ENCODE measurements at regions of chr12 and their contacts with region 1.

Region 1: DNA sequence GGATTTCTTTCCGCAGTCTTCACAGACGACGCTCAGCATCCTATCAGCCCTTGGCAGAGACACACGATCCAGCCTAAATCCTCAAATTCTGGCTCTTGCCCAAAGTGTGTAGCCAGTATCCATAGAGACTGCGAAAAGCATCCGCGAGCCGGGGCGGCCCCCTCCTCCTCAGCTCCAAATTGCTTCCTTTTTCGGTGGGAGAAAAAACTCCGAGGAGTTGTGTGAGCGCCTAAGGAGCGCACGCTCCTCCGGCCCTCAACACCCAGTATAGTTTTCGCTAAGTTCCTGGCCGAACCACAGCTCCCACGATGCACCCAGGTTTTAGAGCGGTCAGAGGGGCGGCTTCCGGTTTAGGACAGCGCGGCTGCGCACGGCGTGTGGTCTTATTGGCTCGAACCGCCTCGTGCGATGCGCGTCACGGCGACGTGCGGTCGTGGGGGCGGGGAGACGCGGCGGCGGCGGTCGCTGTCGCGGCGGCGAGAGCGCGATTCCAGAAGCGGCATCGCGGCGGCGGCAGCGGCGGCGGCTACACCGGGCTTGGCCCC is at the start of gene ADIPOR2:
- DNase-seq: peak; percentile 96 to 98
- ATAC-seq: peak; percentile 98 to 99
- H3K4me3 ChIP-seq: peak within 1 kb of the TSS; percentile 97
- H3K27ac ChIP-seq: peak within 1 kb of the TSS; percentile 95
- H3K4me1 ChIP-seq: peaks cover 19% of the 10 kb centered on the region
- CTCF ChIP-seq: no peak
- EP300 ChIP-seq: no peak
- POLR2A ChIP-seq: peak; percentile 86
- RAD21 ChIP-seq: no peak; a peak in 1 of 5 replicates
- polyA plus RNA-seq, gene ADIPOR2: 65.4 and 80.0 TPM in 2 replicates

Region 2: GRCh38 chr12:1594261-1595025 is 96.2 kb before region 1 on chr12 and contains the start of gene FBXL14:
- CTCF ChIA-PET with region 1: no interaction called
- POLR2A ChIA-PET with region 1: no interaction called
- DNase-seq: peak; percentile 76 to 87
- ATAC-seq: peak; percentile 79 to 84
- H3K4me3 ChIP-seq: peak within 1 kb of the TSS; percentile 68
- H3K27ac ChIP-seq: peak within 1 kb of the TSS; percentile 91 to 99
- H3K4me1 ChIP-seq: peaks cover 38% of the 10 kb centered on the region
- CTCF ChIP-seq: no peak
- EP300 ChIP-seq: no peak
- POLR2A ChIP-seq: peak; percentile 65
- RAD21 ChIP-seq: no peak
- polyA plus RNA-seq, gene FBXL14: 6.7 and 8.2 TPM in 2 replicates

Region 3: DNA sequence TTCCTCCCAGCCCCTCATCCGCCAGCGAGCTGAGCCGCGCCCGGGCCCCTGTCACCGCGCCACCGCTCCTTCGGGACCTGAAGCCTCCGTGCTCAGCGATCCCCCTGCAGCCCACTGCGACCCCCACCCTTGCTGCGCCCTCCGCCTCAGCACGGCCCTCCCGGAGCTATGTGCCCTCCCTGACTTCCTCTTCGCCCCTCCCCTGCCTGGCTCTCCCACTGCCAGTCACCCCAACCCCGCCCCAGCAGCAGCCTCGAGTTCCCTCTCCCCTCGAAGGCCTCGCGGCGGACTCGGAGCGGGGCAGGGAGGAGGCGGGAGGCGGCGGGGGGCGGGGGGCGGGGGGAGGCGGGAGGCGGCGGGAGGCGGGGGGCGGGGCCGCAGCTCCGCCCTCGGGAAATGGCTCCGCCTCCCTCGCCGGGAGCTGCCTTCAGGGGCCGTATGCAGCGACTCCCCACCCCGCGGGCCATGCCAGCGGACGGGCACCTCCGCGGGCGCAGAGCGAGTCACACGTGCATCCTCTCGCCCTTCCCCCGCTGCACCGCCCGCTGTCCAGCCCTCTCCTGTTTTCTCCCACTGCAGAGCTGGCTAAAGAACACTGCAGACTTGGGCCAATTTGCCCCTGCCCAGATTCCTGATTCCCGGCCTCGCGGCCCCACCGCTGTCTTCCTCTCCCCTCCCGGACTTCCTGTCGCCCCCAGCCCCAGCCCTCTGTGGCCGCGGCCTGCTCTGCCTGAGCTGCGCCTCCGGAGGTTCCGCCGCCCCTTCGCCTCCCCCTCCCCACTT is 28.9 kb before region 1 on chr12:
- CTCF ChIA-PET with region 1: no interaction called
- POLR2A ChIA-PET with region 1: interaction called, 19 read pairs
- DNase-seq: peak; percentile 83 to 91
- ATAC-seq: peak; percentile 91 to 92
- H3K4me3 ChIP-seq: peak overlapping the region; percentile 45
- H3K27ac ChIP-seq: peak overlapping the region; percentile 60 to 94
- H3K4me1 ChIP-seq: peaks cover 21% of the 10 kb centered on the region; the same call in 2 of the 3 replicates
- CTCF ChIP-seq: no peak
- EP300 ChIP-seq: no peak
- POLR2A ChIP-seq: peak; percentile 68
- RAD21 ChIP-seq: no peak

Region 4: GRCh38 chr12:1720494-1720893 is 29.8 kb after region 1 on chr12:
- CTCF ChIA-PET with region 1: no interaction called
- POLR2A ChIA-PET with region 1: no interaction called
- DNase-seq: no peak
- ATAC-seq: no peak
- H3K4me3 ChIP-seq: no peak overlapping the region
- H3K27ac ChIP-seq: no peak overlapping the region
- H3K4me1 ChIP-seq: peaks cover 9% of the 10 kb centered on the region
- CTCF ChIP-seq: no peak
- EP300 ChIP-seq: no peak
- POLR2A ChIP-seq: no peak
- RAD21 ChIP-seq: no peak

Measured in A549 (cell line).